Panc1 (cell line): ENCODE measurements at regions of chr9 and their contacts with region 1.

Region 1: GRCh38 chr9:91422758-91423711 is 597 bp downstream of the NFIL3 start:
- DNase-seq: no peak
- ATAC-seq: peak; percentile 55
- H3K4me3 ChIP-seq: peak overlapping the region; percentile 77 to 82
- H3K27ac ChIP-seq: peak overlapping the region; percentile 72
- H3K4me1 ChIP-seq: peaks cover 25% of the 10 kb centered on the region
- H3K27me3 ChIP-seq: no peaks in the 10 kb centered on the region
- CTCF ChIP-seq: peak; percentile 27; the same call in 1 of the 2 replicates

Region 2: DNA sequence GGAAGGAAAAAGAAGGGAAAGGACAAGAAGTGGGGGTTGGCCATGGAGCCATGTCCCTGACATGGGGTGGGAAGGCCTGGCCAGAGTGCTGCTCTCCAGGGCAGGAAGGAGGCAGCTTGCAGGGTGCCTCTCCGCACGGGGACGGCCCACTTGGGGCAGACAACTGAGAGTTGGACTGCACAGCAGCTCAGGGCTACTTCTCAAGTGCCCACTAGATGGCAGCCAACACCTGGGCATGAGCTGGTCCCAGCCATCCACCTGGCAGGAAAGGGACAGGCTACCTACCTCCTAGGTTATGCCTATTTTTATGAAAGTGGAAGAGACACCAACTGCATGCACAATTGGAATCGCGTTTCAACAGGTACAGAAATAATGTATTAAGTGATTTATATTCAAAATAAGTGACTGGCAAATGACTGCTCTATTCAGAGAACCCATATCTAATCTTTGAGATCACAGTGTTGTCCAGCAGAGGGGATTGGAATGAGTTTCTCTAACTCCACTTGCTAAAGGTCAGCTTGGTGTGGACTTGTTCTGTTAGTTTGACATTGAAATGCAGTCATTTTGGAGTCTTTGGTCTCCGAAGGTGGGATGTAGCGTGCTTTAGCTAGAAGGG is 508.1 kb before region 1 on chr9:
- CTCF ChIA-PET with region 1: interaction called, 15 read pairs
- POLR2A ChIA-PET with region 1: no interaction called
- in situ Hi-C with region 1: no loop called
- intact Hi-C with region 1: loop called (anchors 2 kb)
- DNase-seq: peak; percentile 54
- ATAC-seq: peak; percentile 97
- H3K4me3 ChIP-seq: no peak overlapping the region
- H3K27ac ChIP-seq: no peak overlapping the region
- H3K4me1 ChIP-seq: no peaks in the 10 kb centered on the region
- H3K27me3 ChIP-seq: no peaks in the 10 kb centered on the region
- CTCF ChIP-seq: peak; percentile 83

Region 3: DNA sequence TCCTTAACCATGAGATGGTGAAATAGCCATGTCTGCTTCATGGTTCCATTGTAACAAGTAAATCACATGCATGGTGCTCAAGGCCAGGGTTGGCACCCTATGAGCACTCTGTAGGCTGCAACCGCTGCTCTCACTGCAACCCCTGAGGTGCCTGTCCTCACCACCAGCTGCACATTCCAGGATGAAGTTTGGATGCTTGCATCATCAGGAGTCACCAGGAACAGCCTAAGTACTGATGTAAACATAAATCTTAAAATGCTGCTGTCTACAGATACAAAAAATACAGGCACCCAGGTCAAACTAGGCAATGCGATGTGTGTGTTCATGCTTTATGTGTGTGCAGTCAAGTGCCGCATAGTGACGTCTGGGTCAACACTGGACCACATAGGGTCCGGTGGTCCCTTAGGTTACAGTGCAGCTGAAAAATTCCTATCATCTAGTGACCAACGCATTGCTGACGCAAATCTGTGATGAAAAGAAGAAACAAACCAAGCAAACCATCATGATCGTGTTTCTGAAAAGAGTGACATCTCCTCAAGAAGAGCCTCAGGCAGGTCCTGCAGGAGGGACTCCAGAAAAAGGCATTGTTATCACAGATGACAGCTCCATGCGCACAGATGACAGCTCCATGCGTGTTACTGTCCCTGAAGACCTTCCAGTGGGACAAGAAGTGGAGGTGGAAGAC is 296.1 kb before region 1 on chr9:
- CTCF ChIA-PET with region 1: interaction called, 17 read pairs
- POLR2A ChIA-PET with region 1: no interaction called
- in situ Hi-C with region 1: no loop called
- intact Hi-C with region 1: no loop called
- DNase-seq: no peak
- ATAC-seq: no peak
- H3K4me3 ChIP-seq: no peak overlapping the region
- H3K27ac ChIP-seq: no peak overlapping the region
- H3K4me1 ChIP-seq: no peaks in the 10 kb centered on the region; the same call in 1 of the 2 replicates
- H3K27me3 ChIP-seq: no peaks in the 10 kb centered on the region
- CTCF ChIP-seq: no peak

Region 4: DNA sequence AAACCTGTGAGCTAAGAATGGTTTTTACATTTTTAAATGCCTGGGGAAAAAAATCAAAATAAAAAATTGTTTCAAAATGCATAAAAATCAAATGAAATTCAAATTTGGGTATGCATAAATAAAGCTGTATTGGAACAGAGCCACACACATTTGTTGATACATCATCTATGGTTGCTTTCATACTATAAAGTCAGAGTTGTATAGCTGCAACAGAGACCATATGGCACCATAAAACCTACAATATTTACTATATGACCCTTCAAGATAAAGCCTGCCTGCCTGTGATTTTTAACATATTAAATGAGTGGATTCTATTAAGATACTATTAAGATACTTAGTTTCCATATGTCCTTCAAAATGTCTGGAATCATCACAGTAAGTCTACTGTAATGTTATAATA is 101.3 kb before region 1 on chr9:
- CTCF ChIA-PET with region 1: no interaction called
- POLR2A ChIA-PET with region 1: interaction called, 12 read pairs
- in situ Hi-C with region 1: no loop called
- intact Hi-C with region 1: no loop called
- DNase-seq: no peak
- ATAC-seq: no peak
- H3K4me3 ChIP-seq: no peak overlapping the region
- H3K27ac ChIP-seq: no peak overlapping the region
- H3K4me1 ChIP-seq: no peaks in the 10 kb centered on the region
- H3K27me3 ChIP-seq: no peaks in the 10 kb centered on the region
- CTCF ChIP-seq: no peak

Region 5: GRCh38 chr9:91398926-91399325 is 24.1 kb before region 1 on chr9:
- CTCF ChIA-PET with region 1: no interaction called
- POLR2A ChIA-PET with region 1: no interaction called
- in situ Hi-C with region 1: no loop called
- intact Hi-C with region 1: no loop called
- DNase-seq: no peak
- ATAC-seq: no peak
- H3K4me3 ChIP-seq: no peak overlapping the region
- H3K27ac ChIP-seq: no peak overlapping the region
- H3K4me1 ChIP-seq: no peaks in the 10 kb centered on the region
- H3K27me3 ChIP-seq: no peaks in the 10 kb centered on the region
- CTCF ChIP-seq: no peak

Region 6: GRCh38 chr9:92325269-92325990 is 902.4 kb after region 1 on chr9 and contains the starts of genes CENPP and NOL8:
- CTCF ChIA-PET with region 1: no interaction called
- POLR2A ChIA-PET with region 1: interaction called, 12 read pairs
- in situ Hi-C with region 1: no loop called
- intact Hi-C with region 1: no loop called
- DNase-seq: peak; percentile 60
- ATAC-seq: peak; percentile 97
- H3K4me3 ChIP-seq: peak within 1 kb of the TSS; percentile 91 to 97
- H3K27ac ChIP-seq: peak within 1 kb of the TSS; percentile 99
- H3K4me1 ChIP-seq: peaks cover 4% of the 10 kb centered on the region; the same call in 1 of the 2 replicates
- H3K27me3 ChIP-seq: no peaks in the 10 kb centered on the region
- CTCF ChIP-seq: no peak
- total RNA-seq, gene CENPP: 6.7 TPM
- total RNA-seq, gene NOL8: 30.6 TPM